Dorsolateral prefrontal cortex (tissue), 120 donors: ENCODE measurements at regions of chr11 and their contacts with region 1.

Region 1: DNA sequence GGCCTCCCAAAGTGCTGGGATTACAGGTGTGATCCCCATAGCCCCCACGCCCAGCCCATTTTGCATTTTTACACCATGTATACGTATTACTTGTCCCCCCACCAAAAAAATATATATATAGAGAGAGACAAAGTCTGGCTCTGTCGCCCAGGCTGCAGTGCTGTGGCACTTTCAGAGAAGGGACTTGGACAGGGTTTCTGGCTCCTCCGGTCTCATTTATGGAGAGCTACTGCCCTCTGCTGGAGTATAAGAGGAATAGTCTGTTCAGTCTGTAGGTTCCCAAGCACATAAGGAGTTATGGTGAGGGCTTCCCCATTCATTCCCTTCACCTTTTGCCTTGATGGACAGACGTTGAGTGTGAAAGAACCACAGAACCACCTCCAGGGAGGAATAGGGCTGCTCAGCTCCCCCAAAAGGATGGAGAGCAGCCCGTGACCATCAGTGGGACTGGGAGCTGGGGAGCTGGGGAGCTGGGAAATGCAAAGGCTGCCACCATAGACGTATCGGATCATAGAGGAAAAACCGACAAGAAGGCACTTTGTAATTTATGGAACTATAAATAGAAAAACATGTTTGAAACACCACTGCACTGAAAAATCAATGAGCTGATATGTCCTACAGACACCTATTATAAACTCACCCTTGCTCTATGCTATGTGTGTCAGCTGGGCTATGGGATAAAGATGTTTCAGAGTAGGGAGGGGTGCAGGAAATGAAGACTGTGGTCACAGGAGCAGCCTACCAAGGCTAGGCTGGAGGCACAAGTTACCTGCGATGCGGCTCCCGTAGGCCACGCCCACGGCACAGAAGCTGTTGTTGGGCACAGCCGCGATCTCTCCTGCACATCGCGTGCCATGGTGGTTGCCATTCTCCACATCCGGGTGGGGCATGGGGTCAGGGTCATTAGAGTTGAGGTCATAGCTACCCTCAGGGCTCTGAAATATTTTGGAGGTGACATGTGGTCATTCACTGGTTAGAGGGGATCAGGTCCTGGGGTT is 5.2 kb downstream of the PCSK7 start:
- DNase-seq: peak in 3 of 10 donors; percentile 47 to 60 (median 49)
- H3K4me3 ChIP-seq: peak overlapping the region in 2 of 59 donors; percentile 8 to 18
- H3K27ac ChIP-seq: peak overlapping the region in 16 of 59 donors; percentile 4 to 57 (median 42)
- H3K27me3 ChIP-seq: no peaks in the 10 kb centered on the region
- CTCF ChIP-seq: peak; percentile 56 to 94 (median 85)

Region 2: DNA sequence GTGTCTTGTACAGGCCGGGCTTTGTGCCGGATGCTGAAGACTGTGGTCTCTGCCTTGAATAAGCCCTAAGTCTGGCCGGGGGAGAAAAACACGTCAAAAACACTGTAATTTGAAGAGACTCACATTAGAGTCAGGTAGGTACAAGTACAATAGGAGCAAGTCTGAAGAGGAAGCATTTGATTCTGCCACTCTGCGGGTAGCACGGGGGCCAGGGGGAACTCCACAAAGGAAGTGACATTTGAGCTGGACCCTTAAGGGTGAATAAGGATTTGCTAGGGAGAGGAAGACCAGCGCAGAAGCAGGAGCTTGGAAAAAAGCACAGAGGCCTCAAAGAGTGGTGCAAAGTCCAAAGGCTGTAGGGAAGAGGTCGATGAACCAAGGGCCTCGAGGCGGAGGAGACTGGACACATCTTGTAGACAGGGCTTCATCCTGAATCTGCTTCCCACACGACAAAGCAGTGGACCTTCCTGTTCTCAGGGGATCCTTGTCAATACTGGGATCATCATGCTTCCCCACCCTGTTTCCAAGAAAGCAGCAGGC is 492.6 kb before region 1 on chr11:
- intact Hi-C with region 1: loop called in 1 of 2 experiments (anchors 2 kb)
- DNase-seq: no peak
- H3K4me3 ChIP-seq: no peak overlapping the region
- H3K27ac ChIP-seq: no peak overlapping the region
- H3K27me3 ChIP-seq: no peaks in the 10 kb centered on the region
- CTCF ChIP-seq: no peak

Region 3: GRCh38 chr11:116772443-116773202 is 454.1 kb before region 1 on chr11 and contains the start of gene BUD13:
- intact Hi-C with region 1: loop called (anchors 5 kb)
- DNase-seq: peak; percentile 80 to 92 (median 86)
- H3K4me3 ChIP-seq: peak within 1 kb of the TSS; percentile 62 to 100 (median 96)
- H3K27ac ChIP-seq: peak within 1 kb of the TSS; percentile 71 to 99 (median 92)
- H3K27me3 ChIP-seq: no peaks in the 10 kb centered on the region
- CTCF ChIP-seq: peak in 47 of 56 donors; percentile 6 to 62 (median 33)
- total RNA-seq, gene BUD13: 7.8 to 19.6 (median 12.4) TPM

Region 4: GRCh38 chr11:116792869-116793771 is 433.6 kb before region 1 on chr11:
- intact Hi-C with region 1: loop called (anchors 2 to 5 kb)
- DNase-seq: no peak
- H3K4me3 ChIP-seq: no peak overlapping the region
- H3K27ac ChIP-seq: no peak overlapping the region
- H3K27me3 ChIP-seq: no peaks in the 10 kb centered on the region
- CTCF ChIP-seq: no peak

Region 5: DNA sequence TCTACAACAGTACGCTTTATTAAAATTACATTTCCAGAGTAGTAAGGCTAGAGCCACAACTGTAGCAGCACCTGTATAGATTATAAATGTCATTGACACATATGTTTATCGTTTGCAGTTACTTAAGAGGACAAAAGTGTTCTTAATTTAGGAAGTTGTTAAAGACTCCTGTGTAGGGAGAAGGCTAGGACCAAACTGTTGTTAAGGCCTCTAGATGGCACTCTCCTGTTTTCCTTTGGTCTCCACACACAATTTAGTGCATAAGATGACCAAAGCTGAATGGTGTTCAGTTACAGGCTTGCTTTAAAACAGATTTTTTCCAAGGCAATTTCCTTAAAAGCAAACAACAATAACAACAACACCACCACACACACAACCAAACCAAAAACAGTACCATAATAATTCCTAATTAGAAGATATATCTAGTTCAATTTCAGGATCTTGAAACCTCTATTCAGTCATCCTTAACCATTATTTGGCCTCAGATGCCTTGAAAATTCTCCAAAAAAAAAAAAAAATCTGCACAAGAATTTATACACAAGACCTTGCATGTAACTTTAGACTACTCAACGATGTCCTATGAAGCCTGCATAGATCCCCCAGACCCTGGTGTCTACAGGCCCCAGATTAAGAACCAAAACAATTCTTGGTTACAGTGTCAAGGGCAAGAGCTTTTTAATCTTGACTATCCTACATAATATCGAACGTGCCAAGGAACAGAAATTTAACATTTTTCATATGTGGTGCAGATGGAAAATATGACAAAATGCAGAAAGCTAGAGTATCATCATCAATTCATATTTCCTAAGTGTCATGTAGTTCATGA is 346.7 kb before region 1 on chr11:
- intact Hi-C with region 1: loop called in 1 of 2 experiments (anchors 10 kb)
- DNase-seq: no peak
- H3K4me3 ChIP-seq: no peak overlapping the region
- H3K27ac ChIP-seq: peak overlapping the region in 52 of 59 donors; percentile 3 to 88 (median 67)
- H3K27me3 ChIP-seq: no peaks in the 10 kb centered on the region
- CTCF ChIP-seq: peak in 55 of 56 donors; percentile 39 to 88 (median 74)

Region 6: GRCh38 chr11:117143871-117144476 is 82.7 kb before region 1 on chr11 and contains the start of gene PAFAH1B2:
- intact Hi-C with region 1: loop called (anchors 5 kb)
- DNase-seq: peak; percentile 90 to 97 (median 95)
- H3K4me3 ChIP-seq: peak within 1 kb of the TSS; percentile 68 to 99 (median 92)
- H3K27ac ChIP-seq: peak within 1 kb of the TSS; percentile 65 to 99 (median 95)
- H3K27me3 ChIP-seq: no peaks in the 10 kb centered on the region
- CTCF ChIP-seq: peak in 31 of 56 donors; percentile 6 to 59 (median 28)
- total RNA-seq, gene PAFAH1B2: 78.7 to 162 (median 121) TPM

Region 7: GRCh38 chr11:117610045-117610444 is 383.4 kb after region 1 on chr11:
- intact Hi-C with region 1: no loop called
- DNase-seq: peak in 1 of 10 donors; percentile 14
- H3K4me3 ChIP-seq: no peak overlapping the region
- H3K27ac ChIP-seq: peak overlapping the region in 12 of 59 donors; percentile 2 to 61 (median 31)
- H3K27me3 ChIP-seq: no peaks in the 10 kb centered on the region
- CTCF ChIP-seq: no peak